ENCODE measurements at regions of chr10 and their contacts with region 1.

Region 1: DNA sequence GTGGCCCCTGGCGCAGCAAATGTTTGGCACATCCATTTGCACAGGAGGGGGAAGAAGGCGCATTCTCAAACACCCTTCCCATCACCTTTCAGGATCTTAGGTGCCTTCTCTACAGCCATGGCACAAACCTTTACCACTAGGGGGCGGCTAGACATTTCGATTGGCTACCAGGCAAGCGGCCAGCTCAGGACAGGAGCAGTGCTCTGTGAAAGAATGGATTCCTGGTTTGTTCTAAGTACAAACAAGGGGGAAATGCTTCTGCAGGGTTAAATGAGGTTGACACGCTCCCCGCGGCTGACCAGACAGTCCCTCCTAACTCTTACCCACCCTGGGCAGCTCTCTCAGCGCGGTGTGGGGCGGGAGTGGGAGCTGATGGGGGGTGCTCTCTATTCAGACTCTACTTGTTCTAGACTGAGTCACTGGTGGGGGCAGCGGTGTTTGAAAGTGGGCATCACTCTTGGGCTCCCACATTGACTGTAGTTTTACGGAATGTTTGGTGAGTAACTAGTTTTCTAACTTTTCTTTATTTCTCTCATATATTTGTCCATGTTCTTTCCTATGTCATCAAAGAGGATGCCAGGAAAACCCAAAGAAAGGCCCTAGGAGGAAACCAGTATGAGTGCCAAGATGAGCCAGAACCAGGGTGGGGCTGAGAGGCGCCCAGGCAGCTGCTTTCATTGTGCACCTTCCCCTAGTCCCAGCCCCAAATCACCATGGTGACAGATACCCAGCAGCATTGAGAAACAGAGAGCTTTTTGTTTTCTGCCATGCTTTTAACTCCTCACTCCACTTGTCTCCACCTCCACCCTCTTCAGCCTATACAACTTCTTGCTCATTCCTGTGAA is 61.4 kb upstream of the GPR158 start:
- DNase-seq: peak; percentile 61 to 91 (median 84)
- H3K4me3 ChIP-seq: peak overlapping the region in 52 of 59 donors; percentile 2 to 66 (median 39)
- H3K27ac ChIP-seq: peak overlapping the region in 13 of 59 donors; percentile 14 to 60 (median 30)
- H3K27me3 ChIP-seq: no peaks in the 10 kb centered on the region
- CTCF ChIP-seq: peak; percentile 61 to 93 (median 82)

Region 2: GRCh38 chr10:25101461-25102146 is 11.8 kb before region 1 on chr10:
- intact Hi-C with region 1: no loop called
- DNase-seq: no peak
- H3K4me3 ChIP-seq: no peak overlapping the region
- H3K27ac ChIP-seq: no peak overlapping the region
- H3K27me3 ChIP-seq: no peaks in the 10 kb centered on the region
- CTCF ChIP-seq: no peak

Region 3: GRCh38 chr10:25682203-25682851 is 568.9 kb after region 1 on chr10:
- intact Hi-C with region 1: loop called (anchors 10 kb)
- DNase-seq: peak in 9 of 10 donors; percentile 42 to 84 (median 76)
- H3K4me3 ChIP-seq: peak overlapping the region in 58 of 59 donors; percentile 22 to 74 (median 49)
- H3K27ac ChIP-seq: peak overlapping the region in 57 of 59 donors; percentile 22 to 94 (median 84)
- H3K27me3 ChIP-seq: no peaks in the 10 kb centered on the region
- CTCF ChIP-seq: peak in 53 of 56 donors; percentile 22 to 77 (median 54)